ENCODE measurements at regions of chr1 and their contacts with region 1.

Region 1: GRCh38 chr1:85464497-85465098 is 361 bp downstream of the DDAH1 start:
- DNase-seq: peak; percentile 52 to 72 (median 59)
- H3K4me3 ChIP-seq: peak overlapping the region; percentile 9 to 65 (median 40)
- H3K27ac ChIP-seq: peak overlapping the region in 4 of 5 donors; percentile 48 to 83 (median 73)
- H3K4me1 ChIP-seq: peaks cover 7 to 27% of the 10 kb centered on the region in 2 donors
- H3K27me3 ChIP-seq: no peaks in the 10 kb centered on the region
- CTCF ChIP-seq: no peak
- POLR2A ChIP-seq: no peak

Region 2: DNA sequence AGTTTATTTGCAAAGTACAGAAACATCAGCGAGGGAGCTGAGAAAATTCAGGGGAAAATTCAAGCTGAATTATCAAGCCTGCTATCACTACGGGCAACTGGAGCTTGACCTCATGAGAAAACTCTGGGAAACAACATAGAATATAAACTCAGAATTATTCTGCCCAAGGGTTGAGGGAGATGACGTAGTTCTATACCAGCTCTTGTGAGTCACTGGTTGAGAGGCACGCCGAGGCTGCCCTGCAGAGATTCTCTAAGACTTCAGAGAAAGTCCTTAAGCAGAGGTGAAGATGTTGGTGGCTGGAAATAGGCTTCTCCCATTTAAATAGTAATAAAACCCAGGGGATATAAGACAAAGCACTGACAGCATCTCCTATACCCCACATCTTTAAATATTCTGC is 276.1 kb before region 1 on chr1:
- intact Hi-C with region 1: no loop called
- DNase-seq: no peak
- H3K4me3 ChIP-seq: no peak overlapping the region
- H3K27ac ChIP-seq: no peak overlapping the region
- H3K4me1 ChIP-seq: no peaks in the 10 kb centered on the region
- H3K27me3 ChIP-seq: no peaks in the 10 kb centered on the region
- CTCF ChIP-seq: no peak
- POLR2A ChIP-seq: no peak

Region 3: DNA sequence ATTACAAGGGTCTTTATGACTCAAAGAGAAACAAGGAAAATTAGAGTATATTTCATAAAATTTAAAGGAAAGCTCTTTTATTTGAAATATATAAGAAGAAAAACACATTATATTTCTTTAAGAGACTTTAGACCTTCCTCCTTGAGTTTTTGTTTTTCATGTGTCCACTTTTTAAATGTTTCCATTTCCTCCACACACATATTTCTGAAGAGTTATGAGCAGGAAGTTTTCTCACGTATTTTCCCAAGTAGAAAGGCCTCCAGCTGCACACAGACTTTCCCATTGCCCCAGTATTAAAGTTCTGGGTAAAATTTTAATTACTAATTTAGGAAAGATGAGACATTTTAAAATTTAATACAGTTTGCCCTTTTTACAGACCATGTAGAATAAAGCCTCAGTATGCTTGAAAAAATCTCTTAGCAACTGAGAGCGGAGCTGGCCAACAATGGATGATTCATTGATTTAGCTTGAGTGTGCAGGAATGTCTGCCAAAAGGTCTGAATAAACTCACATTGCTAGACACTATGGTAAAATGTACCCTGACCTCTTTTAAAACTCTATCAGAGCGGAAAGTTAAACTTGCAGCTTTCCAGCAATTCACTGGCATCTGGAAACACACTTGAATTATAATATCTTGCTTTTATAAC is 57.6 kb before region 1 on chr1:
- intact Hi-C with region 1: loop called in 1 of 2 experiments (anchors 5 kb)
- DNase-seq: peak; percentile 45 to 78 (median 68)
- H3K4me3 ChIP-seq: peak overlapping the region in 1 of 4 donors; percentile 17
- H3K27ac ChIP-seq: peak overlapping the region; percentile 17 to 61 (median 41)
- H3K4me1 ChIP-seq: peaks cover 8 to 17% of the 10 kb centered on the region in 2 donors
- H3K27me3 ChIP-seq: no peaks in the 10 kb centered on the region
- CTCF ChIP-seq: no peak
- POLR2A ChIP-seq: no peak

Measured in adrenal gland (tissue), 19 donors.